ENCODE measurements at regions of chr1 and their contacts with region 1.

Region 1: DNA sequence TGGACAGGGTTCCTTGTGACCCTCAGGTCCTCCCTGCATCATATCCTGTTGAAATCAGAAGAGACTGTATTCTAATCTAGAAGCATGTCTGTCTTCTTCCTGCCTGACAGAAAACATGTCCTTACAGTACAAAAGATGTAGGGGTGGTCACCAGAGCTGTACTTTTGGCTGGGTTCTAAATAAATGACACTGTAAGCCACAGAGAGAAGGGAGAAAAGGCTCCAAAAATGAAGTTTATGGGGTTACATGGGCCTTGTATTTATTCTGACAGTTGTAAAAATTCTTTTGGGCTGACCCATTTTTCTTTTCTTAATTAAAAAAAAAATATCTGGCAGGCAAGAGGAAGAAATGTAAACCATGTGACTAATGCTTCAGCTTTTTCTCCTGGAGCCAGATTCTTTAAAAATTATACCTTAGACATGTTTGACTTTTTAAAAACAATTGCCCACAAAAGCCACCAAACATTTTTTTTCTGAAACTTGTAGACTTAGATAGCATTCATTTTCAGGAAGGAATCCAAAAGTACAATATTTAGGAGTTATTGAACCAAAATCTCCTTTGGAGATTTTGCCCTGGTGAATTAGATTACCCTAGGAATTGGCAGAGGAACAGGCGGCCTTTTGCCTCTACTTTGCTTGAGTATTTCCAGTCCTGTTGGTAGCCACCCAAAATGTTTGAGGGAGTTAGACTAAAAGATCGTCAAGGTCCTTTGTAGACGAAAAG is 17.1 kb downstream of the RGL1 start:
- DNase-seq: no peak

Region 2: DNA sequence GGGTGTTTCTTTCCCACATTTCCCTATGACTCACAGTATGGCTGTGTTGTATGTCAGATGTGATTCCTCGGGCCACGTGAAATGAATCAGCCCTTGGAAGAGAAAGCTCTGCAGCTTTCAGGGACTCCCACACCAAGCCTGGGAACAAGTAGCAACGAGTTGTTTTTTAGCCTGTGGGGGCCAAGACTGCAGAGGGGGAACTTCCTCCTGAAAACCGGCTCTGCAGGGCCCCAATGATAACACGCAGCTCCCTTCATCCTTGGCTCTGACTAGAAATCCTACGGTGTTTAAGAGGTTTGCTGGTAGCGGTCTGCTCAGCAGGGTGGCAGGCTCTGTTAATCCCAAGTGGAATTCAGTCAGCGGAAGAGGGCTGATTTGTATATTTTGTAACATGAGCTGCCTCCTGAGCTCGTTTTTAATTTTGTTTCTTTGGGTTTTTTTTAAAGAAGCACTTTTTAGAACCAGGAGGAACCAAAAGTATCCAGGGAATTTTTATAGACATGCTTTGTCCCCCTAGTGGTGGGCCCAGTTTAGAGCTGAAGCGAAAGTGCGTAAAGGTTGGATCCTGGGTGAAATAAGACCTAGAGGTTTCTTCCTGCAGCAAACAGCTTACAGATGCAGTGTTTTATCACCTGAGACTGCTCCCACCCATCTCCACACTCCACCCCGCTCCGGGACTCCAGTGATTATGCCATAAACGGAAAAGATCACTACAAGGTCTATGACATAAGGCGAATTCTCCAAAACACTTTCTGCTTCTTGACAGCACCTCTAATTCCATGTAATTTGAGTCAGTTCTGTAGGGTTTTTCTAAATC is 587.2 kb before region 1 on chr1:
- intact Hi-C with region 1: no loop called
- DNase-seq: peak; percentile 82

Region 3: DNA sequence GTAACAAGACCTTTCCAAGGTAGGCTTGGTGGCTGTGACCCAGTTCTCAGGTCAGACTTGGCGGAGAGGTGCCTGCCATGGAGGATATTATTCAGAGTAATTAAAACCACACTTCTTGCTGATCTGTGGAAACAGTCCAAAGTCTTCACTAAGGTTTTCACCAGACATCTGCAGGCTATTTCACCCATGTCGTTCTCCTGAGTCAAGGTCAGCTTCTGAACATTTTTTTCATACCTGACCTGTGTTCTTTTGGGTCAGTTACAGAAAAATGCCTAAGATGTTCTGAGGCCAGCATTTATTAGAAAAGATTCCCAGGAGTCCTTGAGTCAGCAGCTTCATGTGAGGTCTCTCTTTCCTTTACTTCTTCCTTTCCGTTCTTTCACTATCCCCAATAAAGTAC is 37.8 kb after region 1 on chr1:
- intact Hi-C with region 1: no loop called
- DNase-seq: no peak

Region 4: GRCh38 chr1:183871142-183871541 is 49.1 kb after region 1 on chr1:
- intact Hi-C with region 1: loop called in 1 of 2 experiments (anchors 10 kb)
- DNase-seq: no peak

Measured in posterior vena cava (tissue), 2 donors.